ENCODE measurements at regions of chr12 and their contacts with region 1.

Region 1: DNA sequence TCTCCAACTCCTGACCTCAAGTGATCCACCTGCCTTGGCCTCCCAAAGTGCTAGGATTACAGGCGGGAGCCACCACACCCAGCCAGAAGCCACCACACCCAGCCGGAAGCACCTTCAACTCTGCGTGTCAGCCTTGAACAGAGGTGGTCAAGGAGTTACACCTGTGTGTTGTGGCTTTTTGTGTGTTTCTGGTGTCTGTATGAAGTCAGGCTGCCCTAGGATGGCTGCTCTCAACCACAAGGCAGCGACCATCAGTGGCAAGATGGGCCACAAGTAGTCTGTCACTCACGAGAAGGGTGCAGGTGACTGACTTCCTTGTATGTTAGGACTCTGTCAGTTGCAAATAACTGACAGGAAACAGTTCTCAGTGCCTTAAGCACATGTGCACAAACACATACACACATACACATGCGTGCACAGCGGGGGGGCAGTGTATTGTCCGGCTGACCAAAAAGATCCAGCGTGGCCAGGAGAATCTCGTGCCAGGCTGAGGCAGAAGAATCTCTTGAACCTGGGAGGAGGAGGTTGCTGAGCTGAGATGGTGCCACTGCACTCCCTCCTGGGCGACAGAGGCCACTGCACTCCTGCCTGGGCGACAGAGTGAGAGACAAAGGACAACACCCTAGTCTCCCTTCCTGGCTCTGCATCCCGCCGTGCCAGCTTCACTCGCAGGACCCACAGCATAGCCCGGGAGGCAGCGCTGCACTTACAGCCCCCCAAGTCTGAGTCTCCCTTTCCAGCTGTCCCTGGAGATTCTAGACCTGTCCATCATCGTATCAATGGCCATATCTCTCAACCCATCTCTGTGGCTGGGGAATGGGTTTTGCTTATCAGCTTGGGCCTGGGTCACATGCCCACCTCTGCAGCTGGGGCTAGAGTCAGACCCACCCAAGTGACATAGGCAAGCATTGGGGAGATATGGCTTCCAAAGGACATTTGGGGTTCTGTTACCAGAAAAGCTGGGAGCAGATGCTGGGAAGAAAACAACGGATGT is 13.7 kb downstream of the P2RX4 start:
- DNase-seq: peak; percentile 83
- H3K4me3 Mint-ChIP-seq: peak overlapping the region; percentile 57
- H3K27ac Mint-ChIP-seq: peak overlapping the region; percentile 95
- H3K4me1 Mint-ChIP-seq: peaks cover 76% of the 10 kb centered on the region
- H3K27me3 Mint-ChIP-seq: no peaks in the 10 kb centered on the region

Region 2: DNA sequence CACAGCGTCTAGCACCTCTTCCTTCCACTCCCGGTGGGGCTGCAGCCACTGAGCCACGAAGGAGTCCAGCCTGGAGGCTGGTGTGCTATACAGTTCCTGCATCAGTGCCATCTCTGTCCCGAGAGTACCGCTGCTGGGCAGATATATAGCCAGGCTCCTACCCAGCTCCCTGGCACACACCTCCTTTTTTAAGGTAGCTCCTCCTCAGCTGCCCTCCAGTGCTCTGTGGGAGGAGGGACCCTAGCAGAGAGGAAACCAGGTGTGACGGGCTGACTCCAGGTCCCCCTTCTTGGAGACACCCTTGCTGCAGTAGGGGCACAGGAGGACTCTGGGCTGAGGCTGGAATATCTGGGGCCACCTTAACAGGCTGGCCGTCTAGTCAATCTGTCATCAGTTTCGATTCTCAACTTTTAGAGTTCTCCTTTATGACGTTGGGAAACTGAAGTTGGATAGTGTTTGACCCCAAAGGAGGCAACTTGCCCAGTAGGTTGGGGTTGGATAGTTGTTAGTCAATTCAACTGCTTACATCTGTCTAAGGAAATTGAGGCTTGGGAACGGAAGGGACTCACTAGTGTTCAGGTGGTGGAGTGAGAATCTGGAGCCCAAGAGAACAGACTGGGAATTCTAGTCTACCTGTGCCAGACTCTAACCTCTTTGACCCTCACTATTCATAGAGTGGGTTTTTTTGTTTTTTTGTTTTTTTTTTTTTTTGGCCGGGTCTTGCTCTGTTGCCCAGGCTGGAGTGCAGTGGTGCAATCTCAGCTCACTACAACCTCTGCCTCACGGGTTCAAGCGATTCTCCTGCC is 184.5 kb before region 1 on chr12 and contains the start of gene OASL:
- CTCF ChIA-PET with region 1: interaction called, 9 read pairs
- POLR2A ChIA-PET with region 1: interaction called, 10 read pairs
- DNase-seq: peak; percentile 79
- H3K4me3 Mint-ChIP-seq: peak within 1 kb of the TSS; percentile 99
- H3K27ac Mint-ChIP-seq: peak within 1 kb of the TSS; percentile 98
- H3K4me1 Mint-ChIP-seq: peaks cover 42% of the 10 kb centered on the region
- H3K27me3 Mint-ChIP-seq: peaks cover 22% of the 10 kb centered on the region
- total RNA-seq, gene OASL: 104 to 107 TPM

Region 3: DNA sequence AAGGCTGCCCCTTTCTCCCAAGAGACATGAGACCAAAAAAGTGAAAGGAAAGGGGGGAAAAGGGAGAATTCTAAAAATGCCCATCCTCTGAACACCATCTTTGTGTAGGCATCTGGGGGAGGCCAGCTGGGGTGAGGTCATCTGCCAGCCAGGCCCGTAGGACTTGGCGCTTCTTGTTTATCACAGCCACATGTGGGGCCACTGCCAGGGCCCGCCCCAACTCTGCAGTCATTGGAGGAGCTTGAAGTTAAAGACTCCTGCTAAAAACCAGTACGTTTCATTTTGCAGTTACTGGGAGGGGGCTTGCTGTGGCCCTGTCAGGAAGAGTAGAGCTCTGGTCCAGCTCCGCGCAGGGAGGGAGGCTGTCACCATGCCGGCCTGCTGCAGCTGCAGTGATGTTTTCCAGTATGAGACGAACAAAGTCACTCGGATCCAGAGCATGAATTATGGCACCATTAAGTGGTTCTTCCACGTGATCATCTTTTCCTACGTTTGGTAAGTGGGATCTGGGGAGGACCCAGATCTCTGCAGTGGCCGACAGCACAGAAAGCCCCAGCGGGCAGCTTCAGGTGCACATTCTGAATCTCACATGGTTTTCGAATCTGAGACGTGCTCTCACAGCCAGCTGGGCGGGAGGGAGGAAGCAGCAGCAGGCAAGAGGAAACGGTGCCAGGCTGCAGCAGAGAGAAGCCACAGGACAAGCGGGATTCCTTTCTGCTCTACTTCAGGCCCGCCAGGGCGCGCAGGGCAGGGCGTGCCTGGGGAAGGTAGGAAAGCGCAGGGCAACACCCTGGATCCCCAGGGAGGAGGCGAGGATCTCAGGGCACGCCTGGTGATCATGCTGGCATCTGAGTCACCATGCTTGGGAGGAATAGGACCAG is 90.7 kb before region 1 on chr12 and contains the start of gene P2RX7:
- CTCF ChIA-PET with region 1: no interaction called
- POLR2A ChIA-PET with region 1: interaction called, 19 read pairs
- DNase-seq: peak; percentile 68
- H3K4me3 Mint-ChIP-seq: peak within 1 kb of the TSS; percentile 78
- H3K27ac Mint-ChIP-seq: peak within 1 kb of the TSS; percentile 82
- H3K4me1 Mint-ChIP-seq: peaks cover 81% of the 10 kb centered on the region
- H3K27me3 Mint-ChIP-seq: no peaks in the 10 kb centered on the region
- total RNA-seq, gene P2RX7: 47.0 to 49.1 TPM

Region 4: DNA sequence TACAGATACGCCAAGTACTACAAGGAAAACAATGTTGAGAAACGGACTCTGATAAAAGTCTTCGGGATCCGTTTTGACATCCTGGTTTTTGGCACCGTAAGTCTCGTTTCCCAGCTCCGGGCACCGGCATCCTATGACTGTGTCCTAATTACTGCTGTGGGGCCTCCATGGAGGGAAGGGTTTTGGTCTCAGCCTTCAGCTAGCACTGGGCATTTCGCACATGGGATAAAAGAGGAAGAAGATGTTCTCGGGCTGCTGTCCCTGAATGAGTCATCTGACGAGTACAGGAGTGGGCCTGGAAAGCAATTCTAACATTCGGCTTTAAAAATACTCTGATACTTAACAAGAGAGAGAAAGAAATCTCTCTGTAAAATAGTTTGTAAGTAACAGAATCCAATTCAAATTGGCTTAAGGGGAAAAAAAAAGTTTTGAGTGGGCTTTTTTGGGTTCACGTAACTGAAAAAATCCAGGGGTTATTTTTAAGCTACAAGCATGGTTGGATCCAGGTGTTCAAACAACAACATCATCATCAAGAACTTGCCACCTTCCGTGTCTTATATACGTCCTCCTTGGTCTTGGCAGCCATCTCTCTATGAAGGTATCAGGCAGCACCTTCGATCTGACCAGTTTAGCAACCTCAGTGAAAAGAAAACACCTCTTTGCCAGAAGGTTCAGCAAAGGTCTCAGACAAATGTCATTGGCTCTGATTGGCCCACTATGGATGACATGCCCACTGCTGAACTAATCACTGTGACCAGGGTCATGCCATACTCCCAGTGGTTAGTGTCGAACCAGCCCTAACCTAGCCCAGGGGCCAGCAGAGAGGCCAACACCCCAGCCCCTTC is 48.0 kb before region 1 on chr12:
- CTCF ChIA-PET with region 1: no interaction called
- POLR2A ChIA-PET with region 1: no interaction called
- DNase-seq: no peak
- H3K4me3 Mint-ChIP-seq: no peak overlapping the region
- H3K27ac Mint-ChIP-seq: no peak overlapping the region
- H3K4me1 Mint-ChIP-seq: peaks cover 2% of the 10 kb centered on the region
- H3K27me3 Mint-ChIP-seq: no peaks in the 10 kb centered on the region

Region 5: DNA sequence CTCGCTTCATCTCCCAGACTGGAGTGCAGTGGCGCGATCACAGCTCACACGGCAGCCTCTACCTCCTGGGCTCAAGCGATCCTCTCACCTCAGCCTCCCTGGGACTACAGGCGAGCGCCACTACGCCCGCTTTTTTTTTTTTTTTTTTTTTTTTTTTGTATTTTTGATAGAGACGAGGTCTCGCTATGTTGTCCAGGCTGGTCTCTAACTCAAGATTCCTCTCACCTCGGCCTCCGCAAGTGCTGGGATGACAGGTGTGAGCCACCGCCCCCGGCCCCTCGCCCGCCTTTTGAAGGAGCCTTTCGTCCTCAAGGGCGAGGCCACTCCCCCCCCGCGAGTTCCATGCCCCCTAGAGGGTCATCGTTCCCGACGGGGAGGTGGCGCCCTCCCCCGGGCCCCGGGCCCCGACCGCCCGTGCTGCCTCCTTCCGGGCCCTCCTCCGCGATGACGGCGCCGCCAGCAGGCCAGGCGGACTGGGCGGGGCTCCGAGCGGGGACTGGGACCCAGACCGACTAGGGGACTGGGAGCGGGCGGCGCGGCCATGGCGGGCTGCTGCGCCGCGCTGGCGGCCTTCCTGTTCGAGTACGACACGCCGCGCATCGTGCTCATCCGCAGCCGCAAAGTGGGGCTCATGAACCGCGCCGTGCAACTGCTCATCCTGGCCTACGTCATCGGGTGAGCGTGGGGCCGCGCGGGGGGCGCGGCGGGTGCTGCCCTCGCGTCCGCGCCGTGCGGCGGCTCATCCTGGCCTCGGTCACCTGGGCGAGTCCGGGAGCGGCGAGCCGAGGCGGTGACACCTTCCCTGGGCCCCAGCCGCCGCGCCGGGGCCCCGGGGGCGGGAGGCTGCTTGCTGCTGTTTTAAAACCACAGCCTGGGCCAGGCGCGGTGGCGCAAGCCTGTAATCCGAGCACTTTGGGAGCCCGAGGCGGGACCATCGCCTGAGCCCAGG is 13.7 kb before region 1 on chr12 and contains the start of gene P2RX4:
- CTCF ChIA-PET with region 1: interaction called, 21 read pairs
- POLR2A ChIA-PET with region 1: interaction called, 177 read pairs
- DNase-seq: peak; percentile 92
- H3K4me3 Mint-ChIP-seq: peak within 1 kb of the TSS; percentile 83
- H3K27ac Mint-ChIP-seq: peak within 1 kb of the TSS; percentile 88
- H3K4me1 Mint-ChIP-seq: peaks cover 52% of the 10 kb centered on the region
- H3K27me3 Mint-ChIP-seq: peaks cover under 1% of the 10 kb centered on the region
- total RNA-seq, gene P2RX4: 117 to 125 TPM

Region 6: GRCh38 chr12:121240484-121241101 is 17.0 kb after region 1 on chr12:
- CTCF ChIA-PET with region 1: interaction called, 8 read pairs
- POLR2A ChIA-PET with region 1: interaction called, 35 read pairs
- DNase-seq: peak; percentile 83
- H3K4me3 Mint-ChIP-seq: peak overlapping the region; percentile 43
- H3K27ac Mint-ChIP-seq: peak overlapping the region; percentile 78
- H3K4me1 Mint-ChIP-seq: peaks cover 43% of the 10 kb centered on the region
- H3K27me3 Mint-ChIP-seq: no peaks in the 10 kb centered on the region

Region 7: DNA sequence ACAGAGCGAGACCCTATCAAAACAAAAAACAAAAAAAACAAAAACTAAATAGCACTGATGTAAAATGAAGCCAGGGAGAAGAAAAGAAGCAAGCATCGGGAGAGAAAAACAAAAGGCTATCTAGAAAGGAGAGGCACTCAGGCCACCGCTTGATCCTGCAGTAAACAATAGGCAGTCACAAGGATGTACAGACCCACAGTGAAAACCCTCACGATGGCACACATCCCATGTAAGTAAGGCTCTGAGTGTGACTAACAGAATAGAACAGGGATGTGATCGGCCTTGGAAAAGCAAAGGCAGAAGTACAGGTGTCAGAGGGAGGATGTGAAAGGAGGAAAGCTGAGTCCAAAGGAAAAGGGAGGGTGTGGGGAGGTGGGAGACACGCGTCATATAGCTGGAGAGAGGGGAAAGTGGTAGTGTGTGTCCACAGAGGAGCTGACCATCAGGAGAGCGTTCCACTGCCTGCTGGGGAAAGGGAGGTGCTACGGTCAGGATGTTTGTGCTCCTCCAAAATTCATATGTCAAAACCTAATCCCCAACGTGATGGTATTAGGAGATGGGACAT is 41.4 kb after region 1 on chr12:
- CTCF ChIA-PET with region 1: no interaction called
- POLR2A ChIA-PET with region 1: no interaction called
- DNase-seq: no peak
- H3K4me3 Mint-ChIP-seq: no peak overlapping the region
- H3K27ac Mint-ChIP-seq: no peak overlapping the region
- H3K4me1 Mint-ChIP-seq: no peaks in the 10 kb centered on the region
- H3K27me3 Mint-ChIP-seq: no peaks in the 10 kb centered on the region

Region 8: GRCh38 chr12:121296618-121297434 is 73.2 kb after region 1 on chr12 and contains the start of gene CAMKK2:
- CTCF ChIA-PET with region 1: no interaction called
- POLR2A ChIA-PET with region 1: interaction called, 12 read pairs
- DNase-seq: peak; percentile 90
- H3K4me3 Mint-ChIP-seq: peak within 1 kb of the TSS; percentile 88
- H3K27ac Mint-ChIP-seq: peak within 1 kb of the TSS; percentile 75
- H3K4me1 Mint-ChIP-seq: peaks cover 42% of the 10 kb centered on the region
- H3K27me3 Mint-ChIP-seq: peaks cover 1% of the 10 kb centered on the region
- total RNA-seq, gene CAMKK2: 27.6 to 29.1 TPM

Measured in activated CD4-positive, alpha-beta memory T cell treated with anti-CD3 and anti-CD28 coated beads, Interleukin-2, amount 10 ng/mL, durations not matched to agents 7 days and 5 days (primary cell).